ENCODE measurements at regions of chr6 and their contacts with region 1.

Region 1: DNA sequence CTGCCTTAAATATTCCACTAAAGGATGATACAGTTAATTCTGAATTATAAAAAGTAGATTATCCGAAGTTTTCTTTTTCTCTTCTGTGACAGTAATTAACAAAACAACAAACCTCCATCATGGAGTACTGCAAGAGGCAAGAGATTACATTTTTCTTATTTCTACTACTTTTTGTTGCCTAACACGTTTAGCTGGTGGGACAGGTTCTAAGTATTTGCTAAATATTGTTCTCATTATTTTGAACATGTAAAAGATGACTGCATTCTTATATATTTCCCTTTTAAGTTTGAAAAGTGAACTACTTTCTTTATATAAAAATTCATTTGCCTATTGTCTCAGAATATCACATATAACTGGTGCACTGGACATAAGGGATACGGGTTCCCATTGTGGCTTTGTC is 84.1 kb downstream of the IRAK1BP1 start:
- DNase-seq: no peak
- H3K4me3 ChIP-seq: no peak overlapping the region
- H3K27ac ChIP-seq: no peak overlapping the region
- H3K4me1 ChIP-seq: no peaks in the 10 kb centered on the region
- H3K27me3 ChIP-seq: no peaks in the 10 kb centered on the region
- CTCF ChIP-seq: no peak

Region 2: DNA sequence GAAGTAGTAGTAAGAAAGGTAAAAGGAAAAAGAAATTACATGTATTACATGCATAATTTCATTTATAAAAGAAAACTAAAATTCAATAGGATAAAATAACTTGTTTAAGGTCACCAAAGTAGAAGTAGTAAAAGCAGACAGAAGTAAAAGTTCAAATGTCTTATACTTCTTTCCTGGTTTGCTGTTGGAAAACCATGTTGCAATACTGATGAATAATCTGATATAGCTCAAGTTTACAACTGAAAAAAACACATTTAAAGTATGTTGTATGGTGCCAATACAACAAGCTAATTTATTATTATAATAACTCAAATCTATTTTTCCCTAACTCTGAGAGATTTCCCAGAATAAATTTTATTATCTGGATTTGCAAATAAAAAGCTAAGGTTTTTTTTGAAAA is 48.3 kb after region 1 on chr6:
- intact Hi-C with region 1: loop called (anchors 10 kb)
- DNase-seq: no peak
- H3K4me3 ChIP-seq: no peak overlapping the region
- H3K27ac ChIP-seq: no peak overlapping the region
- H3K4me1 ChIP-seq: peaks cover under 1% of the 10 kb centered on the region
- H3K27me3 ChIP-seq: no peaks in the 10 kb centered on the region
- CTCF ChIP-seq: no peak

Measured in left ventricle myocardium inferior (tissue), 1 donor.